ENCODE measurements at regions of chr16 and their contacts with region 1.

Region 1: DNA sequence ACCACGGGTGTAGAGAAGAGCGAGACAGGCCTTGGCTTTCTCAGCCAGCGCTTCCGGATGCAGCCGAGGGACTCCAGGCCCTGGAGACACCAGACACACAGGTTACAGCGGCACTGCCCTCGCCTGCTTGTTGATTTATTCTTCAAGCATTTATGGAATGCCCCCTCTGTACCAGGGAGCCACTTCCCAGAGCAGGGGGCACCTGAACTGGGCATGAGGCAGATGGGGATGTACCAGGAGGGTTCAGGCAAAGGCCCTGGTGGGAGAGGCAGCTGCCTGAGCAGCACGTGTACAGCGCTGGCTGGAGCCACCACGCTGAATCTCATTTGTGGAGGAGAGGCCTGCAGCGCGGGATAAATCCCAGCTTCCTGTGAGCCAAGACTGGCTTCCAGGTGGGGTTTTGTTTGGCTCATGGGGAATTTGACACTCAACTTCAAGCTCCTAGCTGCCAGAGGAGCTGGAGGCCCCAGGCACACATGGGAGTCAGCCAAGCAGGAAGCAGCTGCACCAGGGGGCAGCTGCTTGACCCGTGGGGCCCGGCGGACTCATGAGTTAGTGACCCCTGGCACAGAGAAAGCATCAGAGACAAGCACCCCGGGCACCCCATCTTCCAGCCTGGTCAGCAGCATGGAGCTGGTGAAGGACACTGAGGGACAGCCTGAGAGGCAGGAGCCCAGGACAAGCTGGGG is 59.7 kb downstream of the IL21R start:
- DNase-seq: no peak
- H3K4me3 Mint-ChIP-seq: no peak overlapping the region
- H3K27ac Mint-ChIP-seq: no peak overlapping the region
- H3K4me1 Mint-ChIP-seq: peaks cover 22% of the 10 kb centered on the region
- H3K27me3 Mint-ChIP-seq: no peaks in the 10 kb centered on the region

Region 2: DNA sequence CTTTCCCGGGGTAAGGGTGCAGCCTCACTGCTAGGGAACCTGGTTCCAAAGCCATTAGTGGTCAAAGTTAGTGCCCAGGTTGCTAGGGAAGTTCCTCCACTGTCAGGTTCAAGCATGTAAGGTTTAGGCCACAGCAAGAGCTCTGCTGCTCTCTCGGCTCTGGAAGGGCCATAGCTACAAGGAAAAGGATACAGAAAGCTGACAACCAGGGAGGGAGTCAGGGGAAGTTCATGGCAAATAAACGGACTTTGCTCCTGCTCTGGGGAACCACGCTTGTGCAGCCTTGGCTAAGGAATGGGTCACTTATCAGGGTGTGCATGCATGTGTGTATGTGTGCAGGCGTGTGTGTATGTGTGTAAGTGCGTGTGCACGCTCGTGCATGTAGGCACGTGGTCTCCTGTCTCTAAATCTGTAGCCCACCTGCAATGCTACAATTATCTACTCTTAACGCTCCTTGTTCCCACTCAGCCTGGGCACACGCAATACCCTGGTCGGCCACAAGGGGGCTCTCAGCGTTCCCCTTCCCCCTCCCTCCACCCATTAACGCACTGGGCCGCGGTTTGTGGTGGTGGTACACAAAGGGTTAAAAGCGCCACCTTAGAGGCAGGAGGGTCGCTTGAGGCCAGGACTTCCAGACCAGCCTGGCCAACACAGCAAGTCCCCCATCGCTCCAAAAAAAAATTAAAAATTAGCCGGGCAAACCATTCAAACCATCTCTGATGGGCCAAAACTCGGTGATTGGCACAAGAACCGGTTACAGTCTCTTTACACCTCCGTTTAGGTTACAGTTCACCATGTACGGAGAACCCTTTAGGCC is 306.7 kb before region 1 on chr16:
- intact Hi-C with region 1: loop called (anchors 1 kb)
- DNase-seq: peak; percentile 39
- H3K4me3 Mint-ChIP-seq: no peak overlapping the region
- H3K27ac Mint-ChIP-seq: no peak overlapping the region
- H3K4me1 Mint-ChIP-seq: peaks cover 12% of the 10 kb centered on the region
- H3K27me3 Mint-ChIP-seq: peaks cover 2% of the 10 kb centered on the region

Region 3: GRCh38 chr16:27179500-27180072 is 282.0 kb before region 1 on chr16:
- intact Hi-C with region 1: loop called (anchors 1 kb)
- DNase-seq: peak; percentile 78
- H3K4me3 Mint-ChIP-seq: no peak overlapping the region
- H3K27ac Mint-ChIP-seq: no peak overlapping the region
- H3K4me1 Mint-ChIP-seq: peaks cover 32% of the 10 kb centered on the region
- H3K27me3 Mint-ChIP-seq: peaks cover 11% of the 10 kb centered on the region